B cell (primary cell): ENCODE measurements at regions of chr20 and their contacts with region 1.

Region 1: DNA sequence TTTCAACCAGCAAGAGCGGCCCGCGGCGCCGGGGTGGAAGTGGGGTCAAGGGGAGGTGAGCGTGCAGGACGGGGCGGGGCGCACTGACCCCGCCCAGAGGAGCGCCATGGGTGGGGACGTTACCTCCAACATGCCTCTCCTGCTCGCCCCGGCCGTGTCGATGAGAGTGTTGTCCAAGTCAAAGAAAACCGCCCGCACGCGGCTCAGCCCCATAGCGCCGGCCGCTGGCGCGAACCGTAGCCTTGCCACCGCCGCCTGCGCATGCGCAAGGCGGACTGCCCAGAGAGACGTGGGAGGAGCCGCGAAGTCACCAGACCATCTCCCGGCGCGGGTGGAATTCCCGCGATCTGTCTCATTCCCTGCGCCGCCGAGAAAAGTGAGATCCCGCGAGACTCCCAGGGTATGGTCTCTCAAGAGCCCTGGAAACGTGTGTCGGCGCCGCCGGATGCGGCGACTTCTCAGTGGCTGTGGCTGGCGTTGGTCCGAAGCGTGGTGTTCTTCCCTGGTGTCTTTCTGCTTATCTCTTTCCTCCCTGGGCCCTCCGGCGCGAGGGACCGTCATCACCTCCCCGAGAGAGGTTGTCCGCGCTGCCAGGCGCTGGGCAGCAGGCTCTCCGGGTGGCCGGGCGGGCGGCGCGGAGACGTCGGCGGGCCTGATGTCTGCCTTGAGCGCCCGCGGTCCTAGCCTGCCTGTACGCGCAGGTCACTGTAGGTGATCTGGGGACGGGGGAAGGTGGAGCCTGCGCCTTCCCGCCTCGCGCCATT is at the start of gene NANP:
- DNase-seq: peak; percentile 95
- ATAC-seq: peak; percentile 84
- H3K4me3 ChIP-seq: peak within 1 kb of the TSS; percentile 70 to 97 (median 89)
- H3K4me3 Mint-ChIP-seq: peak within 1 kb of the TSS; percentile 98
- H3K27ac ChIP-seq: peak within 1 kb of the TSS; percentile 68 to 90
- H3K27ac Mint-ChIP-seq: peak within 1 kb of the TSS; percentile 98
- H3K4me1 ChIP-seq: peaks cover 18% of the 10 kb centered on the region in 2 donors
- H3K4me1 Mint-ChIP-seq: peaks cover 32% of the 10 kb centered on the region
- H3K27me3 ChIP-seq: no peaks in the 10 kb centered on the region
- H3K27me3 Mint-ChIP-seq: no peaks in the 10 kb centered on the region
- CTCF ChIP-seq: no peak
- total RNA-seq, gene NANP: 1.8 and 2.3 TPM in 2 replicates

Region 2: GRCh38 chr20:25195014-25195961 is 428.6 kb before region 1 on chr20 and contains the start of gene ENTPD6:
- CTCF ChIA-PET with region 1: no interaction called
- POLR2A ChIA-PET with region 1: no interaction called
- intact Hi-C with region 1: loop called (anchors 5 kb)
- DNase-seq: peak; percentile 95
- ATAC-seq: peak; percentile 85
- H3K4me3 ChIP-seq: peak within 1 kb of the TSS; percentile 55 to 91 (median 88)
- H3K4me3 Mint-ChIP-seq: peak within 1 kb of the TSS; percentile 94
- H3K27ac ChIP-seq: peak within 1 kb of the TSS; percentile 63 to 86
- H3K27ac Mint-ChIP-seq: peak within 1 kb of the TSS; percentile 92
- H3K4me1 ChIP-seq: peaks cover 15 to 24% of the 10 kb centered on the region in 2 donors
- H3K4me1 Mint-ChIP-seq: peaks cover 37% of the 10 kb centered on the region
- H3K27me3 ChIP-seq: no peaks in the 10 kb centered on the region
- H3K27me3 Mint-ChIP-seq: peaks cover 1% of the 10 kb centered on the region
- CTCF ChIP-seq: no peak
- total RNA-seq, gene ENTPD6: 64.4 and 71.3 TPM in 2 replicates

Region 3: GRCh38 chr20:25310268-25310920 is 313.5 kb before region 1 on chr20:
- CTCF ChIA-PET with region 1: no interaction called
- POLR2A ChIA-PET with region 1: no interaction called
- intact Hi-C with region 1: loop called (anchors 10 kb)
- DNase-seq: no peak
- ATAC-seq: peak; percentile 90
- H3K4me3 ChIP-seq: peak overlapping the region in 4 of 5 experiments; percentile 0 to 16 (median 4)
- H3K4me3 Mint-ChIP-seq: peak overlapping the region; percentile 70
- H3K27ac ChIP-seq: peak overlapping the region in 1 of 2 donors; percentile 16
- H3K27ac Mint-ChIP-seq: peak overlapping the region; percentile 82
- H3K4me1 ChIP-seq: peaks cover 10 to 19% of the 10 kb centered on the region in 2 donors
- H3K4me1 Mint-ChIP-seq: peaks cover 24% of the 10 kb centered on the region
- H3K27me3 ChIP-seq: no peaks in the 10 kb centered on the region
- H3K27me3 Mint-ChIP-seq: no peaks in the 10 kb centered on the region
- CTCF ChIP-seq: no peak

Region 4: GRCh38 chr20:25750765-25751696 is 127.1 kb after region 1 on chr20:
- CTCF ChIA-PET with region 1: no interaction called
- POLR2A ChIA-PET with region 1: no interaction called
- intact Hi-C with region 1: loop called (anchors 1 kb)
- DNase-seq: peak; percentile 58
- ATAC-seq: peak; percentile 92
- H3K4me3 ChIP-seq: peak overlapping the region; percentile 15 to 64 (median 55)
- H3K4me3 Mint-ChIP-seq: peak overlapping the region; percentile 83
- H3K27ac ChIP-seq: no peak overlapping the region
- H3K27ac Mint-ChIP-seq: peak overlapping the region; percentile 67
- H3K4me1 ChIP-seq: peaks cover 0 to 6% of the 10 kb centered on the region in 2 donors
- H3K4me1 Mint-ChIP-seq: peaks cover 12% of the 10 kb centered on the region
- H3K27me3 ChIP-seq: no peaks in the 10 kb centered on the region
- H3K27me3 Mint-ChIP-seq: no peaks in the 10 kb centered on the region
- CTCF ChIP-seq: no peak